OCI-LY7 (cell line): ENCODE measurements at regions of chr12 and their contacts with region 1.

Region 1: DNA sequence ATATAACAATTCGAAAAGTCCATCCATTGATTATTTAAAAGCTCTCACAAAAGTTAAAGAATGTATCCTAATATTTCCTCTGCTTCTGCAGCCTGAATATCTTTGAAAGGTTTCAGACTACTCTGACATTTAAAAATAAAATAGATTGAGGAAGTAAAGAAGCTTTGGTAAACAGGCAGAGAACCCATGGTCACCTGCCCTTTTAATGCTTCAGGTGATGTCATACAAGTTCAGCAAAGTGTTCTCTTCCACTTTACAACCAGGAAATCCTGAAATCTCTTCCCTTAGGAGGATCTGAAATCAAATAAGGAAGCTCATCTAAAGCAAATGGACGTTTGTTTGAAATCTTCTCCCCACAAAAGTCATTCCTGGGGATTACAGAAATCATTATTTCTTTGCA is 322.4 kb downstream of the PDZRN4 start:
- DNase-seq: peak; percentile 33
- H3K4me3 ChIP-seq: no peak overlapping the region
- H3K27ac ChIP-seq: peak overlapping the region; percentile 2
- H3K4me1 ChIP-seq: peaks cover 31% of the 10 kb centered on the region
- CTCF ChIP-seq: no peak

Region 2: DNA sequence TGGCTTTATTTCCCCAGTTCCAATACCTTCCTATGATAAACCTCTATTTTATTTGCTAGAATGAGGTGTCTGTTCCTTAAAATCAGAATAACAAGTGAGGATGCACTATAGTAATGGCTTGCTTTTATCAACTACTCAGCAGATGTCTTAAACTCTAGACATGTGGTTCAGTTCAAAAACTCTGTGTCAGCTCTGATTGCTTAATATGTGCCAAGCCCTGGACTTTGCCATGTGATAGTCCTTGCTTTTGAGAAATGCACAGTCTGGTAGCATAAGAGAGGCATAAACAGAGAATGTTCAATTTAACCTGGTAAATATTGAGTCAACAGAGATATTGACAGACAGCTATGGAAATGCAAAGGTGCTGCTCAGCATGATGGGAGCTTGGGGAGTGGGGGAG is 67.6 kb before region 1 on chr12:
- CTCF ChIA-PET with region 1: no interaction called
- POLR2A ChIA-PET with region 1: interaction called, 17 read pairs
- intact Hi-C with region 1: loop called (anchors 5 kb)
- DNase-seq: no peak
- H3K4me3 ChIP-seq: no peak overlapping the region
- H3K27ac ChIP-seq: peak overlapping the region; percentile 5
- H3K4me1 ChIP-seq: peaks cover 52% of the 10 kb centered on the region
- CTCF ChIP-seq: no peak

Region 3: DNA sequence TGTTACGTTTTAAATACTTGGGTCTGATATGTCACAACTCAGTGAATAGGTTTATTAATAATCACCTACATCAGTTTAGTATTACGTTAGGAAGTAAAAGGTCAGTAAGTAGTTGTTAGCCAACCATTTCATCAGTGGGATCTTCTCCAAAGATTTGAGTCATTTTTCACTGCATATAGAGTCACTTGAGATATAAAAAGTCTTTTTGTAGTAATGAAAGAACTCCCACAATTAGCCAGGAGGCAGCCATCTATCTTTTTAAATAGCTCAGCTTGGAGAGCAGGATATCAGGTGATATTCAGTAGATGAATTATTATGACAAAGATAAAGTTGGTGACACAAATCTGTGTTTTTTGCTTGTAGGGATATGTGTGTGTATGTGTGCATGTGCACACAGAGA is 13.1 kb before region 1 on chr12:
- CTCF ChIA-PET with region 1: no interaction called
- POLR2A ChIA-PET with region 1: interaction called, 17 read pairs
- intact Hi-C with region 1: no loop called
- DNase-seq: no peak
- H3K4me3 ChIP-seq: no peak overlapping the region
- H3K27ac ChIP-seq: no peak overlapping the region
- H3K4me1 ChIP-seq: no peaks in the 10 kb centered on the region
- CTCF ChIP-seq: no peak